ENCODE measurements at regions of chr20 and their contacts with region 1.

Region 1: DNA sequence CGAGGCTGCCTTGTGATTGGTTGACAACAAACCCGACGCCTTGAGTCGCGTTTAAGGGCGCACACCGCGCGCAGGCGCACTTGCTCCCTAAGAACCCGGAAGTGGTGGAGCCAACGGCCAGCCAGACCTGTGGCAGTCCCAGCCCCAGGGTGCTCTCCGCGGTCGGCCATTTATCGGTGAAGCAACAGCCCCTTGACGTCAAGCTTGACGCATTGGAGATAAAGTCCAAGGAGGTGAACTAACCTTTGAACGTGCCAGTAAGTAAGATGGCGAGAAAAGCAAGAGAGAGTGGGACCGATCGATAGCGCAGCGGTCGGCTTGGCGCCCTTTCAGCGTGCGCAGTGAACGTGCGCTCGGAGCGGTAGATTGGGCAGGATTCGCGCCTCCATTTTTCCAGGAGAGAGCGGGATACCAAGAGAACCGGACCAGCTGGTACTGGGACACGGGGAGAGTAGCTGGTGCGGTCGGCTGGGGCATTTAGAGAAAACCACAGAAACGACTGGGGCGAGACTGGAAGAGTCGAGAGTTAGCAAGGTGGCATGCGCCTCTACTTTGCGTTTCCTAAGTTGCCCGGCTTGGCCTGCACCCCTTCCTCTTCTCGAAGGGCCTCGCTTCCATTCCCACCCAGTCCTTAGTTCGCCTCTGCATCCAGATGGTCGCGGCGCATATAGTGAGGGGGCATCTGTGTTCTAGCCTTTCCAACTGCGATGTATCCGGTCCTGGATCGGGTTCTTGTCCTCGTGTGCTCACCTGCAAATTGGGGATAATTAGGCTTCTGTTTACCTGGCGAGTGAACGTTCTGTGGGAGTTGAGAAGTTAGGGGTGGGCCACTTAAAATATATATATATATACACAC is at the start of gene CSTF1:
- DNase-seq: peak; percentile 96
- ATAC-seq: peak; percentile 93
- H3K4me3 Mint-ChIP-seq: no peak within 1 kb of the TSS
- H3K27ac Mint-ChIP-seq: no peak within 1 kb of the TSS
- H3K4me1 Mint-ChIP-seq: peaks cover 22% of the 10 kb centered on the region
- H3K27me3 Mint-ChIP-seq: no peaks in the 10 kb centered on the region
- CTCF ChIP-seq: no peak
- total RNA-seq, gene CSTF1: 31.4 and 36.2 TPM in 2 replicates

Region 2: DNA sequence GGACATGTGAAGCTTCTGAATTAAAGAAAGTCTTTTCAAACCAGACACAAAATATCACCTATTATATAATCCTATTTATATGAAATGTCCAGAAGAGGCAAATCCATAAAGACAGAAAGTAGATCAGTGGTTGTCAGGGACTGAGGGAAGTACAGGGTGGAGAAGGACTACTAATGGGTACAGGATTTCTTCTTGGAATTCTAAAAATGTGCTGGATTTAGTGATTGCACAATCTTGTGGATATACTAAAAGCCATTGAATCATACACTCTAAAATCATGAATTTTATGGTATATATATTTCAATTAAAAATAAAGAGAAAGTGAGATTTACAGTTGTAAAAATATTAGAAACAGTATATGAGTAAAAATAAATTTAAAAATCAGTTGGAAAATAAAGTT is 162.7 kb before region 1 on chr20:
- CTCF ChIA-PET with region 1: no interaction called
- POLR2A ChIA-PET with region 1: no interaction called
- intact Hi-C with region 1: no loop called
- DNase-seq: no peak
- ATAC-seq: no peak
- H3K4me3 Mint-ChIP-seq: no peak overlapping the region
- H3K27ac Mint-ChIP-seq: no peak overlapping the region
- H3K4me1 Mint-ChIP-seq: no peaks in the 10 kb centered on the region
- H3K27me3 Mint-ChIP-seq: no peaks in the 10 kb centered on the region
- CTCF ChIP-seq: no peak

Region 3: GRCh38 chr20:56358596-56359211 is 33.8 kb before region 1 on chr20 and contains the start of gene FAM210B:
- CTCF ChIA-PET with region 1: interaction called, 3 read pairs
- POLR2A ChIA-PET with region 1: interaction called, 21 read pairs
- intact Hi-C with region 1: loop called (anchors 1 kb)
- DNase-seq: peak; percentile 73
- ATAC-seq: peak; percentile 100
- H3K4me3 Mint-ChIP-seq: peak within 1 kb of the TSS; percentile 84
- H3K27ac Mint-ChIP-seq: no peak within 1 kb of the TSS
- H3K4me1 Mint-ChIP-seq: peaks cover 16% of the 10 kb centered on the region
- H3K27me3 Mint-ChIP-seq: no peaks in the 10 kb centered on the region
- CTCF ChIP-seq: no peak
- total RNA-seq, gene FAM210B: 5.2 and 5.3 TPM in 2 replicates

Region 4: DNA sequence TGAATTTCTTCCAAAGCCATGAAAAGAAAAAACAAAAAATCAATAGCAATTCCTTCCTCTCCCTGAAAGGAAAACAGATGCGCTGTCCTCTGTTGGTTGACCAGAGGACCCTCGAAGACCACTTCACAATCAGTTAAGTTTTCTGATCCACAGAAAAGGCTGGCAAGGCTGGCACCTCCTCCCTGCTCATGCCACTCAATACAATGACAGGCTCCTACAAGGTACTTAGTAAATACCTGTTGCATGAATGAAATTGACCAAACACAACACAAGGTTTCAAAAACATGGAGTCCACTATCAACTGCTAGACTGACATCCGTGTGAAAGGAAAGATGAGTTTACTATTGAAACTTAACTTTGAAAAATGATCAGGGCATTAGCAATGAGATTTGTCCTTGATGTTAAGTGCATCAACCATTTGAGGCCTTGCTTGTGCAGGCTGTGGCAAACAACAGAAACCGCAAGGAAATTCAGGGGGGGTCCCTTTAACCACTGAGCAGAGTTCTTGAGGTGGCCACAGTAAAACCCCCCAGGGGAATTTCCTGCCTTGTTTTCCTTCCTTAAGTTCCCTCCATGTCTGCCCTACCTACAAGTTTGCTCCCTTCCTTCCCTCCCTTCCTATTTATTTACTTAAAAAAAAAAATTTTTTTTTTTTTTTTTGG is 48.0 kb after region 1 on chr20:
- CTCF ChIA-PET with region 1: no interaction called
- POLR2A ChIA-PET with region 1: no interaction called
- intact Hi-C with region 1: no loop called
- DNase-seq: no peak
- ATAC-seq: no peak
- H3K4me3 Mint-ChIP-seq: no peak overlapping the region
- H3K27ac Mint-ChIP-seq: no peak overlapping the region
- H3K4me1 Mint-ChIP-seq: peaks cover 18% of the 10 kb centered on the region
- H3K27me3 Mint-ChIP-seq: no peaks in the 10 kb centered on the region
- CTCF ChIP-seq: no peak

Region 5: DNA sequence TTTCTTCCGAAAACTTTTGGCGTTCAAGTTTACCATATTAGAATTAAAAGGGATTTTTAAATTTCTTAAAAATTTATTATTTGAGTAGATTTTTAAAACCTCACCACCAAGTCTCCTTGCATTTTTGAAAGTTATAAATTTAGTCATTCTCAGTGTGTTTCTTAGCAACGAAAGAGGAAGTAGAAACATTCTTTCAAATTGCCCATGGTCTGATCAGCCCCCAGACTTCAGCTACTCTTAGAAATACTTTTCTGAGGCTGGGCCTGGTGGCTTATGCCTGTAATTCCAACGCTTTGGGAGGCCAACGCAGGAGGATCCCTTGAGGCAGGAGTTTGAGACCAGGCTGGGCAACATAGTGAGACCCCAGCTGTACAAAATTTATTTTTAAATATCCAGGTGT is 60.8 kb after region 1 on chr20:
- CTCF ChIA-PET with region 1: interaction called, 4 read pairs
- POLR2A ChIA-PET with region 1: no interaction called
- intact Hi-C with region 1: loop called (anchors 1 kb)
- DNase-seq: no peak
- ATAC-seq: peak; percentile 75
- H3K4me3 Mint-ChIP-seq: peak overlapping the region; percentile 15
- H3K27ac Mint-ChIP-seq: peak overlapping the region; percentile 84
- H3K4me1 Mint-ChIP-seq: peaks cover 14% of the 10 kb centered on the region
- H3K27me3 Mint-ChIP-seq: no peaks in the 10 kb centered on the region
- CTCF ChIP-seq: no peak